ENCODE measurements at regions of chr5 and their contacts with region 1.

Region 1: DNA sequence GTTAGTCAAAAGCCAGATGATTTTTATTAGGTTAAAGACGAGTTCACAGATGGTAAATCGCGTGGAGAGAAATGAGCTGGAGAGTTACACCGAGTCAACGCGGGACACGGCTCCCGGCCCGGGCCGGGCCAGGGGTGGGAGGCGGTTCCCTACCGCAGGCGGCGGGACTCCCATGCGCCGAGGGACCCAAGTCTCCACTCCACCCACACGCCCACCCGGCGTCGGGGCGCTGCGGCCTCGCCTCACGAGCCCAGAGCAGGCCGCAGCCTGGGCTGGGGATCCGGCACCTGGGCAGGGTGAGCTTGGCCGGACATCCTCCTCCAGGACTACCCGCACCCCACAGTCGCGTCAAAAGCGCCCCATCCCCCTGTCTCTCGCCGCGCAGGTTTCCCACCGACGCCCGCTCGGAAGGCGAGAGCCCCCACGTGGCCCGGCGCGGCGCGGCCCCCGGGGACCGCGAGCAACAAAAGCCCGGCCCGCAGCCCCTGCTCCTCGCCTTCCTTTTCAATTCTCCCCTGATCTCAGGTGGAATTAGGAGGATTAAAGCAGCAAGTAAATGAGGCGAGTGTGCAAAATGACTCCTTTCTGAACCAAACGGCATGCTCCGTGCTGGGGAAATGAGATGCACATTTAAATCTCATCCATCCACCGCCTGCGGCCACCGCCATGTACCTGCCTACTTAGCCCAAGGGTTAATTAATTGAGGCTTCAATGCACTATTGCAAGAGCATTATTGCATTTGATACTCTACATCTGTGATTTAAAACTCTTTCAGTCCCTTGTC is 196.5 kb upstream of the TBCA start:
- DNase-seq: peak; percentile 76
- H3K4me3 ChIP-seq: peak overlapping the region; percentile 23 to 42; a peak in 2 of 4 replicates
- H3K27ac ChIP-seq: no peak overlapping the region
- H3K4me1 ChIP-seq: peaks cover 0 to 11% of the 10 kb centered on the region in 2 experiments; a peak in 1 of 4 replicates
- H3K27me3 ChIP-seq: peaks cover 16% of the 10 kb centered on the region; the same call in 1 of the 2 replicates
- CTCF ChIP-seq: peak; percentile 30
- EP300 ChIP-seq: no peak; a peak in 1 of 4 replicates
- RAD21 ChIP-seq: peak; percentile 35; the same call in 1 of the 2 replicates

Region 2: DNA sequence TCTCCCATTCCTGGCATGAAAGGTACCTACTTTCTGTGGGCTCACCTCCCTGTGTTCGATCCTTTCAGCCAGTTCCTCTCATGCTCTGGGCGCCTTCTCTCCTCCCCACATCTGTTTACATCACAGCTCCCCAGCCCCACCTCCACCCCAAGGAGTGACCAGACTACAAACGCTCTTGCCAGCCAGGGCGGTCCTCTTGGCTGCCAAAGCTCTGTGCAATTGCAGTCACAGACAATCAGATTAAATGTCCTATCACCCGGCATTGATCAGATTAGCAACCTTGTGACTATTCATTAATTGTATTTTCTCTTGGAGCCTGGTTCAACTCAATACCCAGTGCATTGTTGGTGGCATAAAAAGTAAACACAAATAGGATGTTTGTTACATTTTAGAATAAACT is 14.7 kb after region 1 on chr5:
- CTCF ChIA-PET with region 1: interaction called, 22 read pairs
- POLR2A ChIA-PET with region 1: no interaction called
- DNase-seq: peak; percentile 88
- H3K4me3 ChIP-seq: no peak overlapping the region
- H3K27ac ChIP-seq: no peak overlapping the region
- H3K4me1 ChIP-seq: peaks cover 0 to 10% of the 10 kb centered on the region in 2 experiments; a peak in 1 of 4 replicates
- H3K27me3 ChIP-seq: no peaks in the 10 kb centered on the region
- CTCF ChIP-seq: no peak
- EP300 ChIP-seq: peak in 1 of 2 experiments; percentile 94; a peak in 2 of 4 replicates
- RAD21 ChIP-seq: 0 out of 2 replicates have a peak, but pooled peaks have one; percentile 11

Measured in SK-N-SH (cell line).